Activated CD8-positive, alpha-beta memory T cell treated with anti-CD3 and anti-CD28 coated beads, Interleukin-2, amount 10 ng/mL, durations not matched to agents 7 days and 5 days (primary cell): ENCODE measurements at regions of chr9 and their contacts with region 1.

Region 1: GRCh38 chr9:27333241-27334052 is 36.5 kb upstream of the EQTN start:
- DNase-seq: peak; percentile 49
- ATAC-seq: peak; percentile 64
- H3K4me3 Mint-ChIP-seq: no peak overlapping the region
- H3K27ac Mint-ChIP-seq: no peak overlapping the region
- H3K4me1 Mint-ChIP-seq: no peaks in the 10 kb centered on the region
- H3K27me3 Mint-ChIP-seq: peaks cover 17% of the 10 kb centered on the region

Region 2: DNA sequence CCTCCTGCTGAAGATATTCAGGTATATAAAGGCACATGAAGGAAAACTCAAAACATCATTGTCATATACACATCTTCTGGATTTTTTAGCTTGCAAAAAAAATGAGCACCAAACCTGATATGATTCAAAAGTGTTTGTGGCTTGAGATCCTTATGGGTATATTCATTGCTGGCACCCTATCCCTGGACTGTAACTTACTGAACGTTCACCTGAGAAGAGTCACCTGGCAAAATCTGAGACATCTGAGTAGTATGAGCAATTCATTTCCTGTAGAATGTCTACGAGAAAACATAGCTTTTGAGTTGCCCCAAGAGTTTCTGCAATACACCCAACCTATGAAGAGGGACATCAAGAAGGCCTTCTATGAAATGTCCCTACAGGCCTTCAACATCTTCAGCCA is 190.8 kb after region 1 on chr9 and contains the start of gene IFNK:
- CTCF ChIA-PET with region 1: interaction called, 92 read pairs
- DNase-seq: no peak
- ATAC-seq: no peak
- H3K4me3 Mint-ChIP-seq: no peak within 1 kb of the TSS
- H3K27ac Mint-ChIP-seq: no peak within 1 kb of the TSS
- H3K4me1 Mint-ChIP-seq: peaks cover 7% of the 10 kb centered on the region
- H3K27me3 Mint-ChIP-seq: peaks cover 32% of the 10 kb centered on the region
- total RNA-seq, gene IFNK: not detected

Region 3: GRCh38 chr9:27529316-27530278 is 196.2 kb after region 1 on chr9 and contains the start of gene MOB3B:
- CTCF ChIA-PET with region 1: interaction called, 92 read pairs
- DNase-seq: peak; percentile 77
- ATAC-seq: peak; percentile 91
- H3K4me3 Mint-ChIP-seq: peak within 1 kb of the TSS; percentile 81
- H3K27ac Mint-ChIP-seq: no peak within 1 kb of the TSS
- H3K4me1 Mint-ChIP-seq: peaks cover 7% of the 10 kb centered on the region
- H3K27me3 Mint-ChIP-seq: peaks cover 46% of the 10 kb centered on the region
- total RNA-seq, gene MOB3B: 0.29 to 0.70 TPM

Region 4: DNA sequence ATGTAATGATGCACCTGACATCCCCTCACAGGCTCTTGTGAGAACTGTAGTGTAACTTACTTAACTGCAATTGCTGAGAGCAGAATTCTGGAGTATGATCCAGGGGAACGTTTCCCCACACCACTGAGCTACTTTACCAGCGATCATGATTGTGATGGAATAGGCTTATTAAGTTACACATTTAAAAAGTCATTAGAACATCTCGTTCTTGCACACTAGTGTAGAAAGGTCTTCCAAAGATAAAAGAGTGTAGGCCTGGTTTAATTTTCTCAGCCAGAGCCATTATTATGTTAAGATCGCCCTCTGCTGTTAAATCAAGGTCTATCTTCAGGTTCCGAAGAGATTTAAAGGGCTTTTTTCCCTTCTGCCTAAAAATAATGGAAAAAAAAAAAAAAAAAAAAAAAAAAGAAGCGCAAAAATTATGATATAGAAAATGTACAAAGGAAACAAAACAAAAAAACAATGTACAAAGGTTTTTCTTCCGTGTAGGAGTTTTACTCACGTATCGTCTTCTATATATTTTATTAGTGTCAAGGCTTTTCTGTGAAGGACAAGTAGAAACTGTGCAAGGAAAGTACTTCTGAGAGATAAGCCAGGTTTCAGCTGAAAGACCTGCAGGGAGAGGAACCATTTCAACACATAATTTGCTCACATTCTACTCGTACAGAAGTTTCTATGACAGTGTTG is 214.8 kb after region 1 on chr9:
- CTCF ChIA-PET with region 1: interaction called, 25 read pairs
- DNase-seq: no peak
- ATAC-seq: no peak
- H3K4me3 Mint-ChIP-seq: no peak overlapping the region
- H3K27ac Mint-ChIP-seq: no peak overlapping the region
- H3K4me1 Mint-ChIP-seq: no peaks in the 10 kb centered on the region
- H3K27me3 Mint-ChIP-seq: no peaks in the 10 kb centered on the region